ENCODE measurements at regions of chr3 and their contacts with region 1.

Region 1: DNA sequence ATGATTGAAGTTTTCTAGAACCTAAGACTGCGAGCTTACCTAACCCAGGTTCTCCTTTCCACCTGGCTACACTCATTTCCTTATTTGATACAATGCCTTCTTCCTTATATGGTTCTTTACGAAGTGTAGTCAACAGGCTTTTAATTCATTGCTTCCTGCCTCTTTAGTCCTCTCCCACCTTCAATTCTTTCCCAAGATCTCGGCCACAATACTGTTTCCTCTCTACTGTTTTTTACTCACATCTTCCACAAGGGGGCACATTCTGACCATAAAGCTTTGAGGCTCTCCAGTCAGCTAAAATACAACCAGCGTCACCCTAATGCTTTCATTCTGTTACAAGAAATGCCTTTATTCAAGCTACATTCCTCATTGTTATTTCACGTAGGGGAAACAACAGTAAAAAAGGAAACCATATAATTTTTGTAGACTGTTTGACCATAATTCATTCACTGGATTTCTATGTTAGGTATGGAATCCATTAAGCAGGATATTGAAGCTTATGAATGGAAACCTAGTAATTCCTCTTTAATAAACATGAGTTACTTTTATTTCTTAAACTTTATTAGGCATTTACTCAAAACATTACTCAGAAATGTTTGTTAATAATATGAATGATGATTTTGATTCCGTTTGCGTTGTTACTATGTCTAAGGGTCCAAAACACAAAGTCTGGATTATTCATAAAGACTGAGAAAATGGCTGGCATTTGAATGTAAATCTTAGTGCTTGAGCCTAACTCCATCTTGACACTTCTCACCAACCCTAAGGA is 29.5 kb upstream of the VEPH1 start:
- DNase-seq: no peak
- H3K4me3 ChIP-seq: no peak overlapping the region
- H3K27ac ChIP-seq: no peak overlapping the region
- H3K4me1 ChIP-seq: peaks cover 0 to 3% (median 0%) of the 10 kb centered on the region in 4 donors
- H3K27me3 ChIP-seq: no peaks in the 10 kb centered on the region
- CTCF ChIP-seq: peak; percentile 57 to 70 (median 59)
- EP300 ChIP-seq: no peak
- POLR2A ChIP-seq: no peak

Region 2: DNA sequence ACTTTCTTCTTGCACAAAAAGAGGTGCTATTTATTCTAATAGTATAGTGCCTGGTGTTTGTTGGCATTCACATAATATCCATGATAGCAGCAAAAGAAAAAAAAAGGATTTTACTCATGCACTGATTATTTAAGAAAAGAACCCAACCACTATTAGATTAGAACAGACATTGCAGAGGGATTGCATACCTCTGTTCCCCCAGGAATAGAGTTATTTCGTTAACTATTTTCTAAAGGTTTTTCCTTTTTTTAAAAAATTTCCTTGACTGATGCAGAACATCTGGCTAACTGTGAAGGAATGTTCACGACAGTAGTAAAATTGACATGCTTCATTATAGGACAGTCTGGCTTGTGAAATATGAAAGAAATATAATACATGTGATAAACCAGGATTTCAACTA is 232.6 kb before region 1 on chr3:
- intact Hi-C with region 1: no loop called
- DNase-seq: no peak
- H3K4me3 ChIP-seq: no peak overlapping the region
- H3K27ac ChIP-seq: no peak overlapping the region
- H3K4me1 ChIP-seq: no peaks in the 10 kb centered on the region
- H3K27me3 ChIP-seq: no peaks in the 10 kb centered on the region
- CTCF ChIP-seq: no peak
- EP300 ChIP-seq: no peak
- POLR2A ChIP-seq: no peak

Region 3: DNA sequence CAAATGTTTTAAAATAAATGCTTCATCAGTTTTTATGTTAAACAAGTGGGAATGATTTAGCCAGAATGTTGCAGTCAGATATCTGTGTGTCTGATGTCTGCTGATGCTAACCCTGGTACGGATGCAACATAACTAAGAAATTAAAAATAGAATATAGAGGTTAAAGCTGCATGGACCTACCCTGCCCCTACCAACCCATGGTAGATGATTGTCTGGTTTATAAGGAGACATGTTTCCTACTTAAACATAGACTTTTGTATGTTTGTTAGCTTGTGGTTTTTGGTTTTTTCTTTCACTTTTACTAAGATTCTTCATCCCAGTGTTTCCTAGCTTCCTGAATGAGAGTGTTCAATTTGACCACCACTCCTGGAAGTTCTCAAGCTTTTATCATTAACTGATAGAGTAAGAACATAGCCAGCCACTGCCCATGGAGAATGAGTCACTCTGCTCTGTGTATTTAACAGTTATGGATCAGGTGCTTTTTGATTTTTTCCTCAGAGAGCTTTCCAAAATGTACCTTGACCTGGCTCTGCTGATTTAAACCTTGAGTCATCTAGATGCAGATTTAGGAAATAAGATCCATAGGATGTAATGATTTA is 41.2 kb after region 1 on chr3:
- intact Hi-C with region 1: loop called (anchors 2 kb)
- DNase-seq: no peak
- H3K4me3 ChIP-seq: no peak overlapping the region
- H3K27ac ChIP-seq: no peak overlapping the region
- H3K4me1 ChIP-seq: no peaks in the 10 kb centered on the region
- H3K27me3 ChIP-seq: no peaks in the 10 kb centered on the region
- CTCF ChIP-seq: no peak
- EP300 ChIP-seq: no peak
- POLR2A ChIP-seq: no peak

Measured in esophagus muscularis mucosa (tissue), 4 donors.